Gastrocnemius medialis (tissue), 4 donors: ENCODE measurements at regions of chr1 and their contacts with region 1.

Region 1: DNA sequence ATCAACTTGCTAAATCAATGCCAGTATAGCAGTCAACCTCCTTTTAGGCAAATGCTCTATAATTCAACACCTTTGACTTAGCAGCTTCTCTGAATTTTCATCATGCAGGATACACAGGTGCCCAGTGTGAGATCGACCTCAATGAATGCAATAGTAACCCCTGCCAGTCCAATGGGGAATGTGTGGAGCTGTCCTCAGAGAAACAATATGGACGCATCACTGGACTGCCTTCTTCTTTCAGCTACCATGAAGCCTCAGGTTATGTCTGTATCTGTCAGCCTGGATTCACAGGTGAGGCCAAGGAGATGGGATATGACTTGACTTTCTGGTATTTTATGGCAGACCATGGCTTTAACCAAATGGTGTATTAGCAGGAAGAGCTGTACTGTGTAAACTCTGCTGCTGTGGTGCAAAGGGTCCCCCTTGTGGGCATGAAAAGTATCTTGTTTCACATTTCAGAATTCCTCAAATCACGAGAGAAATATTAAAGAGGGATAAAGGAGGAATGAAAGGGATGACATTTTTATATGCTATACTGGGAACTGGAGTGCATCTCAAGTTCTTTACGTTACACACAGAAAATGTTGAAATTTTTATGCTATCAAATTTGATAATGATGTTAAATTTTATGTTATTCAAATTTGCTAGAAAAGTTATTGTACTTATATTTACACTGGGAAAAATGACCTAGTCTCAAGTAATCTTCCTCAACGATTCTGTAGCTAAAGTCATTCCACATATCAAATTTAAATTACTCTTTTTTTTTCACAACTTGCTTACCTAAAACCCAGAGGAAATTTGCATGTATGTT is 88.9 kb downstream of the CRB1 start:
- DNase-seq: no peak
- ATAC-seq: peak in 1 of 2 donors; percentile 65
- H3K4me3 ChIP-seq: no peak overlapping the region
- H3K27ac ChIP-seq: no peak overlapping the region
- H3K4me1 ChIP-seq: no peaks in the 10 kb centered on the region
- H3K27me3 ChIP-seq: no peaks in the 10 kb centered on the region
- CTCF ChIP-seq: peak; percentile 42 to 63 (median 53)
- POLR2A ChIP-seq: no peak

Region 2: DNA sequence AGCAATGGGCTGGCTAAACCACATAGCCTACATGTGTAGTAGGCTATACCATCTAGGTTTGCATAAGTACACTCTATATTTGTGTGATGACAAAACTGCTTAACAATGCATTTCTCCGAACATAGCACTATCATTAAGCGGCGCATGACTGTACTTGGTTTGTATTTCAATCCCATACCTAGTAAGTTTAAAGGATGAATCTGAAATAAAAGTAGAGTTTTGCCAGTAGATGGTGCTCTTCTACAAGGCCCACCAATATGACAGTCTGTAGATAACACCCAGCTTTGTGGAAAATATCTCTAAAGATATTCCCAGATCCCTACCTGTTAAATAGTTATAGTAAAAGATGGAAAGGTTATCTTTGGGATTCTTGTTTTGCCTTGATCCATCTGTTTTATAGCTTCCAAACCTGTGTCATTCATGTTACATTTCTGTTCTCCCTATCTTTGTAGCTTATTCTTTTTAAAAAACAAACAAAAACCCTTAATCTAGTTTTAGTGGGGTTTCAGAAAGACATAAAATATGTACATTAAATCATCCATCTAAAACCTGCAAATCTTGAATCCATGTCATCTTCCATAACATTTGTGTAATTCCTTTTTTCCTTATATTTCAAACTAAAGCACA is 176.6 kb before region 1 on chr1:
- in situ Hi-C with region 1: loop called in 1 of 4 experiments (anchors 25 kb)
- intact Hi-C with region 1: loop called (anchors 1 kb)
- DNase-seq: no peak
- ATAC-seq: peak; percentile 60 to 78
- H3K4me3 ChIP-seq: no peak overlapping the region
- H3K27ac ChIP-seq: no peak overlapping the region
- H3K4me1 ChIP-seq: peaks cover 0 to 2% of the 10 kb centered on the region in 2 donors
- H3K27me3 ChIP-seq: no peaks in the 10 kb centered on the region
- CTCF ChIP-seq: peak; percentile 15 to 68 (median 39)
- POLR2A ChIP-seq: no peak

Region 3: GRCh38 chr1:197327776-197328364 is 29.1 kb before region 1 on chr1:
- in situ Hi-C with region 1: no loop called
- intact Hi-C with region 1: loop called (anchors 1 kb)
- DNase-seq: no peak
- ATAC-seq: no peak
- H3K4me3 ChIP-seq: no peak overlapping the region
- H3K27ac ChIP-seq: no peak overlapping the region
- H3K4me1 ChIP-seq: no peaks in the 10 kb centered on the region
- H3K27me3 ChIP-seq: no peaks in the 10 kb centered on the region
- CTCF ChIP-seq: peak; percentile 28 to 65 (median 41)
- POLR2A ChIP-seq: no peak

Region 4: DNA sequence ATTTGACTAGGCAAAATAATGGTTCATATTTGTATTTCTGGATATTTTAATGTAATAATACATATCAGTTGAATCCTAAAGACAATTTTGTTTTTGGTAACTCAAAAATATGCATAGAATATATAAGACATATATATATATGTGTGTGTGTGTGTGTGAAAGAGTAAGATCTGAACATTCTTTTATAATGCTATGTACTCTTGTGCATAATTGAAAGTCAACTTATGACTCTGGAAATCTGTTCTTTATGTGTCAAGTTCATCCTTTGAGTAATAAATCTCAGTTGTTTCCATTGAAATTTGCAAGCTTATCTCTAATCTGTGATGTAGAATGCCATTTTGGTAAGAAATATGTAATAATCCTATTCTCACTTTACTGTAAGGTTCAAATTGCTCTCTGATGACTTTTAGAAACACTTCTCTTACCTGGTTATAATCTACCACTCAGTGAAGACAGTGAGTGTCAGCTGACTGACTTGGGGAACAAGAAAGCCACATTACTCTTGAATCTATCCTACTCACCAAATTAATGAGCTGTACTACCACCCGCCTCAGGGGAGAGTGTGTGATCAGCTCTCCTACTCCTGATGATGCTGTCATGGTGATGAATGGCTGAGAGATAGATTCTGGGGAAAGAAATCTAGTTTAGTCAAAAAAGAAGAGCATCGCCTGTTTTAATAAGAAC is 784.9 kb after region 1 on chr1:
- in situ Hi-C with region 1: no loop called
- intact Hi-C with region 1: no loop called
- DNase-seq: no peak
- ATAC-seq: no peak
- H3K4me3 ChIP-seq: no peak overlapping the region
- H3K27ac ChIP-seq: no peak overlapping the region
- H3K4me1 ChIP-seq: no peaks in the 10 kb centered on the region
- H3K27me3 ChIP-seq: no peaks in the 10 kb centered on the region
- CTCF ChIP-seq: no peak
- POLR2A ChIP-seq: no peak